Naive thymus-derived CD4-positive, alpha-beta T cell (primary cell): ENCODE measurements at regions of chr4 and their contacts with region 1.

Region 1: GRCh38 chr4:153521999-153522801 is 56.0 kb downstream of the TMEM131L start:
- DNase-seq: peak in 8 of 9 donors; percentile 52 to 82 (median 78)
- ATAC-seq: peak; percentile 73
- H3K4me3 ChIP-seq: peak overlapping the region; percentile 50
- H3K4me3 Mint-ChIP-seq: peak overlapping the region; percentile 80 to 90 (median 84)
- H3K27ac ChIP-seq: peak overlapping the region; percentile 68
- H3K27ac Mint-ChIP-seq: peak overlapping the region; percentile 88 to 96 (median 93)
- H3K4me1 ChIP-seq: peaks cover 75 to 87% of the 10 kb centered on the region in 2 donors
- H3K4me1 Mint-ChIP-seq: peaks cover 85 to 99% (median 98%) of the 10 kb centered on the region in 7 donors
- H3K27me3 ChIP-seq: no peaks in the 10 kb centered on the region
- H3K27me3 Mint-ChIP-seq: no peaks in the 10 kb centered on the region

Region 2: GRCh38 chr4:153432968-153433753 is 89.0 kb before region 1 on chr4:
- CTCF ChIA-PET with region 1: interaction called, 5 read pairs
- POLR2A ChIA-PET with region 1: interaction called, 5 read pairs
- intact Hi-C with region 1: loop called (anchors 1 to 2 kb)
- DNase-seq: peak; percentile 22 to 72 (median 59)
- ATAC-seq: peak; percentile 90
- H3K4me3 ChIP-seq: peak overlapping the region; percentile 65
- H3K4me3 Mint-ChIP-seq: peak overlapping the region; percentile 78 to 98 (median 87)
- H3K27ac ChIP-seq: peak overlapping the region; percentile 66
- H3K27ac Mint-ChIP-seq: peak overlapping the region; percentile 88 to 98 (median 96)
- H3K4me1 ChIP-seq: peaks cover 13 to 54% of the 10 kb centered on the region in 2 donors
- H3K4me1 Mint-ChIP-seq: peaks cover 31 to 83% (median 72%) of the 10 kb centered on the region in 7 donors
- H3K27me3 ChIP-seq: no peaks in the 10 kb centered on the region
- H3K27me3 Mint-ChIP-seq: no peaks in the 10 kb centered on the region

Region 3: GRCh38 chr4:153488006-153488891 is 34.0 kb before region 1 on chr4:
- CTCF ChIA-PET with region 1: interaction called, 4 read pairs
- POLR2A ChIA-PET with region 1: interaction called, 14 read pairs
- intact Hi-C with region 1: loop called (anchors 1 to 5 kb)
- DNase-seq: peak; percentile 51 to 87 (median 79)
- ATAC-seq: peak; percentile 81
- H3K4me3 ChIP-seq: peak overlapping the region; percentile 59
- H3K4me3 Mint-ChIP-seq: peak overlapping the region; percentile 79 to 93 (median 84)
- H3K27ac ChIP-seq: peak overlapping the region; percentile 85
- H3K27ac Mint-ChIP-seq: peak overlapping the region; percentile 87 to 99 (median 95)
- H3K4me1 ChIP-seq: peaks cover 57 to 71% of the 10 kb centered on the region in 2 donors
- H3K4me1 Mint-ChIP-seq: peaks cover 68 to 91% (median 81%) of the 10 kb centered on the region in 7 donors
- H3K27me3 ChIP-seq: no peaks in the 10 kb centered on the region
- H3K27me3 Mint-ChIP-seq: no peaks in the 10 kb centered on the region

Region 4: DNA sequence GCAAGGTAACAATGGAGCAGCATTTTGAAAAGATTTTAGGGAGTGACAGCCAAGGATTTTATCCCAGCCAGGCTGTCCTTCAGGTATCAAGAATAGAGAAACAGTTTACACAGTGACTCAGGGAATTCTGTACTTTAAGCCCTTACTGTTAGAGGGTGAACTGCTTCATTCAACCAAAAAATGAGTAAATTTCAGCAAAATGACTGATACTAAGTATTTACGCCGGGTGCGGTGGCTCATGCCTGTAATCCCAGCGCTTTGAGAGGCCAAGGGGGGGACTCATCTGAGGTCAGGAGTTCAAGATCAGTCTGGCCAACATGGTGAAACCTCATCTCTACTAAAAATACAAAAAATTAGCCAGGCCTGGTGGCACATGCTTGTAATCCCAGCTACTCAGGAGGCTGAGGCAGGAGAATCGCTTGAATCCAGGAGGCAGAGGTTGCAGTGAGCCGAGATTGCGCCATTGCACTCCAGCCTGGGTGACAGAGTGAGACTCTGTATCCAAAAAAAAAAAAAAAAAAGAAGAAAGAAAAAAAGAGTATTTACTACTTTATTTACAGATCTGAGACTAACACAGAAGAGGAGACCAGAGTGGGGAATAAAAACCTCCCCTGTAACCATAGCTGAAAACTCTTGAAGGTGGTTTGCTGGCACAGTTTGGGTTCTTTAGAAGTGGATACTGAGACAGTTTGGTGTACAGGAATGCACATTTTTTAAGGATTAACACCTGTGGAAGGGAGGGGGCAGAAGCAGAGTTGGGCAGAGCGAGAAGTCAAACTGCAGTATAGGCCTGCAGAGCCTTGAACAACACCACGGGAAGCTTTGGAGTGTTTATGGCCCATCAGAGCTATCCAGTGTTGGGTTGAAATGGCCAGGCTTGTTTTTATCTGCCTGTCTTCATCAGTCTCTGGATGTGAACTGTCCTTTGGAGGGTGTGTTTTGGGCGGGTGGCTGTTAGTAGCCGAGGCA is 15.6 kb before region 1 on chr4:
- CTCF ChIA-PET with region 1: interaction called, 5 read pairs
- POLR2A ChIA-PET with region 1: interaction called, 5 read pairs
- intact Hi-C with region 1: loop called in 1 of 2 experiments (anchors 1 kb)
- DNase-seq: peak in 2 of 9 donors; percentile 5 to 15
- ATAC-seq: no peak
- H3K4me3 ChIP-seq: no peak overlapping the region
- H3K4me3 Mint-ChIP-seq: peak overlapping the region in 8 of 10 donors; percentile 22 to 61 (median 54)
- H3K27ac ChIP-seq: peak overlapping the region; percentile 14
- H3K27ac Mint-ChIP-seq: peak overlapping the region; percentile 36 to 93 (median 81)
- H3K4me1 ChIP-seq: peaks cover 0 to 57% of the 10 kb centered on the region in 2 donors
- H3K4me1 Mint-ChIP-seq: peaks cover 44 to 95% (median 80%) of the 10 kb centered on the region in 7 donors
- H3K27me3 ChIP-seq: no peaks in the 10 kb centered on the region
- H3K27me3 Mint-ChIP-seq: no peaks in the 10 kb centered on the region

Region 5: GRCh38 chr4:153555730-153556433 is 33.7 kb after region 1 on chr4:
- CTCF ChIA-PET with region 1: no interaction called
- POLR2A ChIA-PET with region 1: interaction called, 3 read pairs
- intact Hi-C with region 1: loop called in 1 of 2 experiments (anchors 2 kb)
- DNase-seq: no peak
- ATAC-seq: no peak
- H3K4me3 ChIP-seq: no peak overlapping the region
- H3K4me3 Mint-ChIP-seq: no peak overlapping the region
- H3K27ac ChIP-seq: no peak overlapping the region
- H3K27ac Mint-ChIP-seq: peak overlapping the region in 7 of 9 donors; percentile 8 to 84 (median 43)
- H3K4me1 ChIP-seq: no peaks in the 10 kb centered on the region
- H3K4me1 Mint-ChIP-seq: peaks cover 11 to 77% (median 61%) of the 10 kb centered on the region in 7 donors
- H3K27me3 ChIP-seq: no peaks in the 10 kb centered on the region
- H3K27me3 Mint-ChIP-seq: no peaks in the 10 kb centered on the region